ENCODE measurements at regions of chr5 and their contacts with region 1.

Region 1: DNA sequence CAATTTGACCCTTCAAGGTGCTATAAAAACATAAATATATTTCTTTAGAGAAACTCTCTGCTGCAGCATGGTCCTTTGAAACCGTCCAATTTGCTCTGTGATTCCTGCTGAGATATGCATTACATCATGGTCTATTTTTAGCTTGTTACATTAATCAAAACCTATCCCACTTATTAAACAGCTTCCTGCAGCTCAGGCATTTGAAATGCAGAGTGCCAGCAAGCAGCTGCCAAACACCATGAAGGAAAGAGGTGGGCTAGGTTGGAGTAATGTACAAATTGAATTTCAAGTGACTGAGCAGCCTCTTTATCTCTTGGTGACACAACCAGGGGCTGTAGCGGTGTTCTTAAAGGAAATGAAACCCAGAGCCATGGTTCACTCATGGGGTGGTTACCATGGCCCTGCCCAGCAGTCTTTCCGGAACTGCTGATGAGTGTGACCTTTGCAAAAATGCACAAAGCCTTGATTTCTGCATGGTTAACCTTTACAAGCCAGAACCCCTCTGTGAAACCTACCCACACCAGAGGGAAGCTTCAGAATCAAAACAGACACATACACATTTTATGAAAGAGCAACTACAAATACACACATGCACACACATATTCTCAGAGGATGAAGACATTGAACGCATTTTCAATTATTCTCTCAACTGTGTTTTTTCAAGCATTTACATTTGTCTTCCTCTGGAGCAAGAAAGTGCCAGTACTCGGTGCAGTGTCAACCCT is 155.8 kb upstream of the ZNF608 start:
- DNase-seq: no peak

Region 2: DNA sequence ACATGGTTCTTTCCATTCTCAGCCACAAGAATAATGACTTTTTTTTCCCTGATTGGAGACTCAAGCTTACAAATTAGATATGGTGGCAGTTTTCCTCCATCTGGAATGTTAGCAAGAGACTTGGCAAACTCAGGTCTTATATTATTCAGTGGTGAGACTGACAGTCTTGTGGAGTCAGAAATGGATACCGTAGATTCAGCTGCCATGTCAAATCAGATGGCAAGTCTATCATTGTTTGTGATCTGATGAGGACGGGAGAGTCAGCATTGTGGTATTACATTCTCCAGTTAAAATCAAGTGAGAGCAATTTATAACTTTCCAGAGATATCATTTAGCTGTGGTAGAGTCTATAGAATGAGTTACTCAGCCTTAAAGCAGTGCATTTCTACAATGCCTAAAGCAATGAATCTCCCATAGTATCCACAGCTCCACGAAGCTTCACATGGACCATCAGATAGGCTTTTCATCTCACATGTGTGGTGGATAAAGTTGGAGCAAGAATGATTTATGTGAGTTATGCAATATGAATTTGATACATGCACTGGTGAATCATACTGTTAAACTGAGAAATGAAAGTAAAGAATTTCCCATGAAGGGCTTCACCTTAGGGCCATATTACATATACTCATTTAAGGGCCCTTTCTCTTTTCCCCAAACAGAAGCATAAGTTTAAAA is 586.4 kb before region 1 on chr5:
- intact Hi-C with region 1: no loop called
- DNase-seq: no peak

Region 3: GRCh38 chr5:124754206-124754927 is 147.9 kb before region 1 on chr5:
- intact Hi-C with region 1: loop called (anchors 5 kb)
- DNase-seq: no peak

Measured in posterior cingulate gyrus (tissue), 11 donors.